Right ventricle myocardium superior (tissue), 1 donor: ENCODE measurements at regions of chr10 and their contacts with region 1.

Region 1: GRCh38 chr10:70549962-70550458 is 52.5 kb downstream of the PRF1 start:
- DNase-seq: peak; percentile 79
- ATAC-seq: peak; percentile 83

Region 2: DNA sequence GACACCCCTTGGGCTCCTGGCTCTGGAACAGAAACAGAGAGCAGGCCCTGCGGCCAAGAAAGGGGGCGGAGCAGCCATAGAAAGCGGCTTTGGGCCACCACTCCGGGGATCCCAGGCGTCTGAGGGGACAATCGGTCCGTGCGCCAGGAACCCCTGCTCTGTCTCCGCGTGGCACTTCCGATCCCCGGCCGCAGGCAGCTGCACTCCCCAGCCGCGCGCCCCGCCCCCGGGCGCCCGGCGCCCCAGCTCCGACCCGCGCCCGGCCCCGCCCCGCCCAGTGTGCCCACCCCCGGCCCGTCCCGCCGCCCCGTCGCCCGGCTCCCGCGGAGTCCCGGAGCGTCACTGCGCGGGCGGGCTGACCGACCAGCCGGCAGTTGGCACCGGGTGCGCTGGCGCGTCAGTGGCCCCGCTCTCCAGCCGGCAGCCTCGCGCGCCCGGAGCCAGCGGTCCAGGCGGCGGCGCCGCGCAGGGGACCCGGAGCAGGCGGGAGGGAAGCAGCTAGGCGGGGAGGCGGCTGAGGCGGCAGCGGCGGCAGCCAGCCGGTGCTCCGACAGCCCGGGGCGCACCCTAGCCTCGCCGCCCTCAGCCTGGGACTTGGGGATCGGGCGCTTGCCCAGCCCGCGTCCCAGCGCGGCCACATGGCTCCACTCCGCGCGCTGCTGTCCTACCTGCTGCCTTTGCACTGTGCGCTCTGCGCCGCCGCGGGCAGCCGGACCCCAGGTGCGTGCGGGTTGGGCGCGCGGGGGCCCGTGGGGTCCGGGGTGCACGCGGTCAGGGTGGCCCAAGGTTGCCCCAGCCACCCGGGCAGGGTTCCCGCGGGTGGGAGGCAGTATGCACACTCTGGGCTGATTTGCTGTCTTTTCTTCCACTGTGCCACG is 122.4 kb after region 1 on chr10 and contains the start of gene ADAMTS14:
- intact Hi-C with region 1: loop called (anchors 10 kb)
- DNase-seq: peak; percentile 61
- ATAC-seq: peak; percentile 66
- total RNA-seq, gene ADAMTS14: 0.16 TPM

Region 3: GRCh38 chr10:70758757-70759514 is 208.9 kb after region 1 on chr10:
- intact Hi-C with region 1: loop called (anchors 2 kb)
- DNase-seq: peak; percentile 54
- ATAC-seq: peak; percentile 72

Region 4: DNA sequence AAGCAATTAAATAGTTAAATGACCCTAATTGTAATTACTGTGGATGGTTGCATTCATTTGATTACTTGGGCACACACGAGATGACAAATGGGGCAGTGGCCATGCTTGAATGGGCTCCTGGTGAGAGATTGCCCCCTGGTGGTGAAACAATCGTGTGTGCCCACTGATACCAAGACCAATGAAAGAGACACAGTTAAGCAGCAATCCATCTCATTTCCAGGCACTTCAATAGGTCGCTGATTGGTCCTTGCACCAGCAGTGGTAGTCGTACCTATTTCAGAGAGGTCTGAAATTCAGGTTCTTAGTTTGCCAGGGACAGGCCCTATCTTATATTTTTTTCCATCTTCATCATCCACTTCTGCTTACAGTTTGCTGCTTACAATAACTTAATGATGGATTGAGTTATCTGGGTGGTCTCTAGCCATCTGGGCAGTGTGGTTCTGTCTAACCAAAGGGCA is 330.1 kb after region 1 on chr10:
- intact Hi-C with region 1: loop called (anchors 5 kb)
- DNase-seq: peak; percentile 76
- ATAC-seq: peak; percentile 82